ENCODE measurements at regions of chr16 and their contacts with region 1.

Region 1: DNA sequence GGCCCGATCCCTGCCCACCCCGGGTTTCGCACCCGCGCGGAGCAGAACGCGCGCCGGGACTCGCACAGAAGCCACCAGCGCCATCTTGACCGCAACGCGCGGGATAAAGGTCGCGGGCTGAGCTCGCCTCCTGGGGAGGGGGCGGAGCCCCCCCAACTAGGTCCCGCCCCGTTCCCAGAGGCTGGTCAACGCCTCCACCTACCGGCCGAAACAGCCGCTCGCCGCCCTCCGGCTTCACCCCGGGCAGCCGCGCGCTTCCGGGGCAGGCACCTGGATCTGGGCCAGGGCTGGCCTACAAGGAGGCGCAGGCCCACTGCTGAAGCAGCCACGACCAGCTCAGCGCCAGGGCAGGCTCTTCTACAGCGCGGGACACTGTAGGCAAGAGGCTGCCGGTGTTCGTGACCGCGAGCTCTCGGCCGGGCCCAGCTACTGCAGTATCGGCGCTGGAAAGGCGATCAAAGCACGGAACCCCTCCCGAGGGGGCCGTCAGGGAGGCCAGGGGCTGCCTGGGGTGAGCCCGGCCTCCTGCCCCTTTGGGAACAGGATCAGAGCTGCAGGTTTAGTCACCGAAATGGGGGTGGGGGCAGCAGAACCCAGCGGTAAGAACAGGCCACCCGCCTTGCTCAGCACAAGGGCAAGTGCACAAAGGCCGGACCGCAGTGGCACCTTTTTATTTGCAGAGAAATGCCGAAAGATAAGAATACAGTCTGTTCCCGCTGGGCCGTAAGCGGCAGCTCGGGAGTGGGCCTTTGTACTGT is at the start of gene ECI1:
- DNase-seq: peak; percentile 93
- H3K4me3 ChIP-seq: peak within 1 kb of the TSS; percentile 56 to 61 (median 59)
- H3K27ac ChIP-seq: peak within 1 kb of the TSS; percentile 69
- H3K4me1 ChIP-seq: peaks cover 20% of the 10 kb centered on the region
- H3K27me3 ChIP-seq: no peaks in the 10 kb centered on the region
- CTCF ChIP-seq: peak; percentile 24 to 66
- total RNA-seq, gene ECI1: 79.3 to 84.7 TPM

Region 2: DNA sequence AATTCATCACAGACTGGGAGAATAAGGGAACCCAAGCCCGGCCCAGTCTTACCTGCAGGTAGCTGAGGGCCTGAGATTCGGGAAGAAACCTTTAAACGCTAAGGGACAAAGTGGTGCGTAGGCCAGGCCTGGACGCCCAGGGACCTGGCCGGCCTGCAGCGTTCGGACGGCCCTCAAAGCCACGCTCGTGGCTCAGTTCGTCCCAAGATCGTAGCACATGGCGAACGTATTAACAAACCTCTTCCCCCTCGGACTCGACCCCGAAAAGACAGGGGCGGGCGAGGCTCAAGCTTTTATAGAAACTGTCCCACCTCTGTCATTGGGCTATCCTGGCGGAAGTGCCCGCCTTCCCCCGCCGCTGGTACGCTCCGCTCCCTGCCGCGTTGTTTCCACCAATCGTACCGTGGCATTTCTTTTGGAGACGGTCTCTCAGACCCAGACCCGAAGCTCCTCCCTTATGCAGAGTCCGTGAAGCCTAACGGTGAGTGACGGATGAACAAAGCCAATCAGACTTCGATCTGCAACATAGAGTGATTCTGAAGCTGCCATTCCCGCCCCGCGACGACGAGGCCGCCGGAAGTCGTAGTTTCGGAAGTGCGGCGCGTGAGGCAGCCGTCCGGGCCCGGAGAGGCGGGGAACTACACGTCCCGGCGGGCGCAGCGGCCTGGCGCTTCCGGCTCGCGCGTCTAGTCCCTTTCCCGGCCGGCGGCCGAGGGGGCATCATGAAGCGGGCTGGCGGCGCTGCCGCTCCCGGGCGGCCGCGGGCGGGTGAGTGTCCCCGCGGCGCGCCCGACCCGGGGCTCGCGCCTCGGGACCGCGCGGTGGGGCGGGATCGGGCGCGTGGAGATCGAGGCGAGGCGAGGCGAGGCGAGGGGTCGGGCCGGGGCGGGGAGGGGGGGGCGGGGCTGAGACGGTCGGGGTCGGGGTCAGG is 96.3 kb before region 1 on chr16 and contains the start of gene TRAF7:
- CTCF ChIA-PET with region 1: interaction called, 3 read pairs
- dilution Hi-C with region 1: no loop called
- in situ Hi-C with region 1: no loop called
- intact Hi-C with region 1: loop called (anchors 2 kb)
- DNase-seq: peak; percentile 100
- H3K4me3 ChIP-seq: peak within 1 kb of the TSS; percentile 78 to 94 (median 81)
- H3K27ac ChIP-seq: peak within 1 kb of the TSS; percentile 76
- H3K4me1 ChIP-seq: peaks cover 72% of the 10 kb centered on the region
- H3K27me3 ChIP-seq: no peaks in the 10 kb centered on the region
- CTCF ChIP-seq: no peak
- total RNA-seq, gene TRAF7: 47.5 to 110 TPM

Region 3: DNA sequence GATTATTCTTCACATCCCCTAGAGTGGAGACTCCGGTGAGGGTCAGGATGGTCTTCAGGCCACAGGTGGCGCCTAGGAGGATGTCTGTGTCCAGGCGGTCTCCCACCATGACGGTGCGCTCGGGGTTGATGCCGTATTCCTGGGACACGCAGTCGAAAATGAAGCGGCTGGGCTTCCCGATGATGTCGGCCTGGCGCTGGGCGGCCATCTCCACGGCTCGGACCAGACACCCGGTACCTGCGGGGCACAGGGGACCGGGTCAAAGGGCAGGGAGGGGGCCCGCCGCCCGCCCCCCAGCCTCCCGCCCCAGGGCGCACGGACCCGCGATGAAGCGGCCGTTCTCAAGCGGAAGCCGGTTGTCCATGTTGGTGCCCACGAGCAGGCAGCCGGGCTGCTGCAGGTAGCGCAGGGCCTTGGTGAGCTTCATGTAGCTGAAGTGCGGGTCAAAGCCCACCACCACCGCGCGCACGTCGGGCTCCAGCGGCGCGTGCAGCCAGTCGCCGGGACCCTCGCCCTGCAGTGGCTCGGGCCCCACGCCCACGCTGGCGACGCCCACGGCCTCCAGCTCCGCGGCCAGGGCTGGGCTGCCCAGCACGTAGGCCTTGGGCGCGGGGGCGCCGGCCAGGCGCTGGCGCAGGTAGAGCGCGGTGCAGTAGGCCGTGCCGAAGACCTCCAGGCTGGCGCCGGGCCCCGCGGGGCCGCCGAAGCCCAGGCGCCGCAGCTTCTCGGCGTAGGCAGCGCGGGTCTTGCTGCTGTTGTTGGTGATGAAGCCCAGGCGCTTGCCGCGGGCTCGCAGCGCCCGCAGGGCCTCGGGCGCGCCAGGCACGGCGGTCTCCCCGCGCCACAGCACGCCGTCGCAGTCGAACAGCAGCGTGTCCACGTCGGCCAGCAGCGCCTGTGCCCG is 37.6 kb before region 1 on chr16:
- CTCF ChIA-PET with region 1: no interaction called
- dilution Hi-C with region 1: no loop called
- in situ Hi-C with region 1: no loop called
- intact Hi-C with region 1: loop called (anchors 1 kb)
- DNase-seq: no peak
- H3K4me3 ChIP-seq: peak overlapping the region; percentile 52 to 88 (median 60)
- H3K27ac ChIP-seq: peak overlapping the region; percentile 47
- H3K4me1 ChIP-seq: peaks cover 26% of the 10 kb centered on the region
- H3K27me3 ChIP-seq: no peaks in the 10 kb centered on the region
- CTCF ChIP-seq: no peak

Region 4: GRCh38 chr16:2267913-2268666 is 16.4 kb after region 1 on chr16 and contains the start of gene RNPS1:
- CTCF ChIA-PET with region 1: interaction called, 7 read pairs
- dilution Hi-C with region 1: no loop called
- in situ Hi-C with region 1: no loop called
- intact Hi-C with region 1: loop called (anchors 1 kb)
- DNase-seq: peak; percentile 95
- H3K4me3 ChIP-seq: peak within 1 kb of the TSS; percentile 63 to 90 (median 79)
- H3K27ac ChIP-seq: peak within 1 kb of the TSS; percentile 74
- H3K4me1 ChIP-seq: peaks cover 18% of the 10 kb centered on the region
- H3K27me3 ChIP-seq: no peaks in the 10 kb centered on the region
- CTCF ChIP-seq: no peak
- total RNA-seq, gene RNPS1: 79.4 to 207 TPM

Region 5: GRCh38 chr16:2500918-2501750 is 249.5 kb after region 1 on chr16:
- CTCF ChIA-PET with region 1: no interaction called
- dilution Hi-C with region 1: no loop called
- in situ Hi-C with region 1: loop called in 1 of 2 experiments (anchors 25 kb)
- intact Hi-C with region 1: loop called (anchors 5 kb)
- DNase-seq: peak; percentile 49
- H3K4me3 ChIP-seq: no peak overlapping the region
- H3K27ac ChIP-seq: no peak overlapping the region
- H3K4me1 ChIP-seq: peaks cover 5% of the 10 kb centered on the region
- H3K27me3 ChIP-seq: no peaks in the 10 kb centered on the region
- CTCF ChIP-seq: peak; percentile 84 to 95